ENCODE measurements at regions of chr2 and their contacts with region 1.

Region 1: GRCh38 chr2:40554668-40555285 is 102.9 kb upstream of the SLC8A1 start:
- DNase-seq: peak; percentile 2
- ATAC-seq: peak; percentile 93
- H3K4me3 ChIP-seq: no peak overlapping the region
- H3K27ac ChIP-seq: no peak overlapping the region
- H3K4me1 ChIP-seq: no peaks in the 10 kb centered on the region
- H3K27me3 ChIP-seq: no peaks in the 10 kb centered on the region
- CTCF ChIP-seq: peak; percentile 78 to 87 (median 78)
- EP300 ChIP-seq: no peak
- POLR2A ChIP-seq: no peak
- RAD21 ChIP-seq: peak; percentile 87

Region 2: GRCh38 chr2:39837856-39838453 is 716.8 kb before region 1 on chr2:
- CTCF ChIA-PET with region 1: interaction called, 16 read pairs
- POLR2A ChIA-PET with region 1: no interaction called
- RAD21 ChIA-PET with region 1: no interaction called
- SMC1A ChIA-PET with region 1: interaction called, 4 read pairs
- in situ Hi-C with region 1: no loop called
- intact Hi-C with region 1: no loop called
- DNase-seq: peak; percentile 11
- ATAC-seq: peak; percentile 98
- H3K4me3 ChIP-seq: no peak overlapping the region
- H3K27ac ChIP-seq: no peak overlapping the region
- H3K4me1 ChIP-seq: no peaks in the 10 kb centered on the region
- H3K27me3 ChIP-seq: no peaks in the 10 kb centered on the region
- CTCF ChIP-seq: peak; percentile 69 to 97 (median 96)
- EP300 ChIP-seq: no peak
- POLR2A ChIP-seq: no peak
- RAD21 ChIP-seq: peak; percentile 62

Region 3: GRCh38 chr2:39913648-39914461 is 640.9 kb before region 1 on chr2:
- CTCF ChIA-PET with region 1: interaction called, 72 read pairs
- POLR2A ChIA-PET with region 1: no interaction called
- RAD21 ChIA-PET with region 1: interaction called, 41 read pairs
- SMC1A ChIA-PET with region 1: interaction called, 28 read pairs
- in situ Hi-C with region 1: loop called (anchors 5 kb)
- intact Hi-C with region 1: loop called (anchors 1 kb)
- DNase-seq: peak; percentile 7
- ATAC-seq: peak; percentile 75
- H3K4me3 ChIP-seq: no peak overlapping the region
- H3K27ac ChIP-seq: no peak overlapping the region
- H3K4me1 ChIP-seq: no peaks in the 10 kb centered on the region
- H3K27me3 ChIP-seq: no peaks in the 10 kb centered on the region
- CTCF ChIP-seq: peak; percentile 59 to 75 (median 67); a peak in 5 of 6 replicates
- EP300 ChIP-seq: no peak
- POLR2A ChIP-seq: no peak
- RAD21 ChIP-seq: peak; percentile 89

Region 4: GRCh38 chr2:40212804-40213470 is 341.8 kb before region 1 on chr2:
- CTCF ChIA-PET with region 1: interaction called, 5 read pairs
- POLR2A ChIA-PET with region 1: no interaction called
- RAD21 ChIA-PET with region 1: interaction called, 4 read pairs
- SMC1A ChIA-PET with region 1: interaction called, 4 read pairs
- in situ Hi-C with region 1: no loop called
- intact Hi-C with region 1: loop called (anchors 10 kb)
- DNase-seq: no peak
- ATAC-seq: peak; percentile 36; the same call in 1 of the 3 replicates
- H3K4me3 ChIP-seq: no peak overlapping the region
- H3K27ac ChIP-seq: no peak overlapping the region
- H3K4me1 ChIP-seq: no peaks in the 10 kb centered on the region
- H3K27me3 ChIP-seq: no peaks in the 10 kb centered on the region
- CTCF ChIP-seq: peak in 1 of 3 experiments; percentile 24; a peak in 2 of 6 replicates
- EP300 ChIP-seq: no peak
- POLR2A ChIP-seq: no peak
- RAD21 ChIP-seq: peak; percentile 46; the same call in 1 of the 2 replicates

Region 5: DNA sequence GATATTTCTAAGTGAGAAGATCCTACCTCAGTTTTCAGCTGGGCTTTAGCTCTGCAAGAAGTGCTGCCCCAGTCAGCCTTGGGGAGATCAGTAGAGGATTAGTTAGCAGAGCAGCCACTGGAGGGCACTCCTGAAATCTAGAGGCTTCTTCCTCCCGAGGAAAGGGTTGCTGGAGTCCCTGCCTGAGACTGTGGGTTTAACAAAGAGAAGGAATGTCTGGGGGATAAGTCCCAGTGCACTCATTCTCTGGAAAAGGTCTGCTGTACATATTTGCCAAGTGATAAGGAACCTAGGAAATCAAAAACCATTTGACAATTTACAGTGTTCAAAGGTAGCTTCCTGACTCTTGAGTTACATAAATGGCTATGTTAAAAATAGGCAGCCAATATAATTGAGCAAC is 310.1 kb before region 1 on chr2:
- CTCF ChIA-PET with region 1: interaction called, 19 read pairs
- POLR2A ChIA-PET with region 1: no interaction called
- RAD21 ChIA-PET with region 1: no interaction called
- SMC1A ChIA-PET with region 1: interaction called, 7 read pairs
- in situ Hi-C with region 1: no loop called
- intact Hi-C with region 1: loop called (anchors 2 kb)
- DNase-seq: no peak
- ATAC-seq: peak; percentile 85
- H3K4me3 ChIP-seq: no peak overlapping the region
- H3K27ac ChIP-seq: no peak overlapping the region
- H3K4me1 ChIP-seq: no peaks in the 10 kb centered on the region
- H3K27me3 ChIP-seq: no peaks in the 10 kb centered on the region
- CTCF ChIP-seq: peak; percentile 40 to 50 (median 49)
- EP300 ChIP-seq: no peak
- POLR2A ChIP-seq: no peak
- RAD21 ChIP-seq: peak; percentile 63

Region 6: DNA sequence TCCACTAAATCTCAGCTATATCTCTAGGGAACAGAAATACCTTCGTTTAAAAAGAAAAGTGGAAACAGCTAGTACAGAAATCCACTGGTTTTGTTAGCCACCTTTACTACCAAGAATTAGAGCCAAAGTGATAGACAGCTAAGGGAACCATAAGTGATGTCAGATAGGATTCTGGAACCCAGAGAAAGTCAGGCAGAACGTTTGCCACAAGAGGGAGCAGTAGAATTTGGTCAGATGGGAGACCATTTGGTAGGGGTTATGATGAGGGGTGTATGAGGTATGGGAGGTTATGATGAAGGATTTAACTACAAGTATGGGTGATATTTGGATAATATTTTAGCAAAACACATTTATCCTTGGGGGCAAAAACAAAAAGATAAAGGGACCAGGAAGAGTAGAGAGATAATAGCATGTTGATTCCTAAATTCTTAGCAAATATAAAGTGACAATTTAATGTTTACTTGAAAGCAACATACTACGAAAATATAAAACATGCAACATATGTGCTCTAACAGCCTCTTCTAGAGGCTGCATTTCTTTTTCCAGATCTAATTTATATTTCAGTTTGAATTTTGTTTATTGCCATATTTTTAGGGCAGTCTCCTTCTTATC is 106.2 kb before region 1 on chr2:
- CTCF ChIA-PET with region 1: interaction called, 82 read pairs
- POLR2A ChIA-PET with region 1: no interaction called
- RAD21 ChIA-PET with region 1: interaction called, 29 read pairs
- SMC1A ChIA-PET with region 1: interaction called, 39 read pairs
- in situ Hi-C with region 1: no loop called
- intact Hi-C with region 1: loop called (anchors 2 kb)
- DNase-seq: no peak
- ATAC-seq: peak; percentile 61
- H3K4me3 ChIP-seq: no peak overlapping the region
- H3K27ac ChIP-seq: no peak overlapping the region
- H3K4me1 ChIP-seq: no peaks in the 10 kb centered on the region
- H3K27me3 ChIP-seq: peaks cover 5 to 11% of the 10 kb centered on the region in 2 experiments
- CTCF ChIP-seq: peak; percentile 31 to 43 (median 32); a peak in 5 of 6 replicates
- EP300 ChIP-seq: no peak
- POLR2A ChIP-seq: no peak
- RAD21 ChIP-seq: peak; percentile 38; the same call in 1 of the 2 replicates

Region 7: GRCh38 chr2:41510108-41510507 is 955.3 kb after region 1 on chr2:
- CTCF ChIA-PET with region 1: no interaction called
- POLR2A ChIA-PET with region 1: no interaction called
- RAD21 ChIA-PET with region 1: no interaction called
- SMC1A ChIA-PET with region 1: no interaction called
- in situ Hi-C with region 1: no loop called
- intact Hi-C with region 1: no loop called
- DNase-seq: no peak
- ATAC-seq: no peak
- H3K4me3 ChIP-seq: no peak overlapping the region
- H3K27ac ChIP-seq: no peak overlapping the region
- H3K4me1 ChIP-seq: no peaks in the 10 kb centered on the region
- H3K27me3 ChIP-seq: no peaks in the 10 kb centered on the region
- CTCF ChIP-seq: no peak
- EP300 ChIP-seq: no peak
- POLR2A ChIP-seq: no peak
- RAD21 ChIP-seq: no peak